Activated T-helper 2 cell treated with anti-CD3 and anti-CD28 coated beads, Interferon-gamma antibody, Interleukin-2, Interleukin-4, amounts not matched to agents 10 μg/mL and 5 μg/mL and 100 μg/mL, durations not matched to agents 14 hours and 24 hours and 36 hours (primary cell): ENCODE measurements at regions of chr5 and their contacts with region 1.

Region 1: DNA sequence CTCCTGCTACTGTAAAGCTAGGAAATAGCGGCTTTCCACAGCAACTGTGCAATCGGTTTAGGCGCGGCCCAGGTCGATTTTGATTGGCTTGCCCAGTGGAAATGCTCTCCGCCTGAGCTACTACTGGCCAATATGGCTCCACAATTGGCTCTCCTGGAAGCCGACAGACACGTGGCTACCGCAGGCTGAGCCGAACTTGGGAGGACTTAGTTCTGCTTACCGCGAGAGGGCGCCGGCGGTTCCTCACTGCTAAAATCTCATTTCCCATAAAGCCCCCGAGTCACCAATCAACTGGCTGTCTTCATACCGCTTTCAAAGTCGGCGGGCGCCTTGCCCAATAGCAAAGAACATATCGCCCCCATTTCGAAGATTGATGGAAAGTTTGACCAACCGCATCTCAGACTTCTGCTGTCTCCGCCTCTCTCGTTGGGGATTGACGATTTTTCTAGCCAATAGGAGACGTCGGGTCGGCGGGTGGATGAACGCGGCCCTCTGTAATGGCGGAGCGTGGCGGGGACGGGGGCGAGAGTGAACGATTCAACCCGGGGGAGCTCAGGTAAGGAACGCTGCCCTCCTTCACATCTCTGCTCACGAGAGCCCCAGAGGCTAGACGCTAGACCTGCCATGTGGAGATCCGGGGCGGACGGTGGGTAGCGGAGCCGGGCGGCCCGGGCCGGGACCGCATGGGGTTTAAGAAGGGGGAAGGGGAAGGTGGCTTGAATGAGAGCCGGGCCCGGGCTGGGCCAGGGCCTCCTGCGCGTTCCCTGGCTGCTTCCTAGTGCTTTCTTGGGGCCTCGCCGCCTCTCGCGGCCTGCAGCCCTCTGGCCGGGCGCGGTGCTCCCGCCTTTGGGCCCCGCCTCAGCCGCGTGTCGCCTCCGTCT is at the start of gene TCERG1:
- DNase-seq: peak; percentile 98
- H3K4me3 Mint-ChIP-seq: peak within 1 kb of the TSS; percentile 100
- H3K27ac Mint-ChIP-seq: peak within 1 kb of the TSS; percentile 100
- H3K4me1 Mint-ChIP-seq: peaks cover 29% of the 10 kb centered on the region
- H3K27me3 Mint-ChIP-seq: peaks cover 10% of the 10 kb centered on the region
- total RNA-seq, gene TCERG1: 134 and 136 TPM in 2 replicates

Region 2: GRCh38 chr5:145946112-145946861 is 500.8 kb before region 1 on chr5:
- intact Hi-C with region 1: loop called (anchors 5 kb)
- DNase-seq: no peak
- H3K4me3 Mint-ChIP-seq: peak overlapping the region; percentile 14
- H3K27ac Mint-ChIP-seq: peak overlapping the region; percentile 66
- H3K4me1 Mint-ChIP-seq: peaks cover 48% of the 10 kb centered on the region
- H3K27me3 Mint-ChIP-seq: peaks cover 21% of the 10 kb centered on the region

Region 3: DNA sequence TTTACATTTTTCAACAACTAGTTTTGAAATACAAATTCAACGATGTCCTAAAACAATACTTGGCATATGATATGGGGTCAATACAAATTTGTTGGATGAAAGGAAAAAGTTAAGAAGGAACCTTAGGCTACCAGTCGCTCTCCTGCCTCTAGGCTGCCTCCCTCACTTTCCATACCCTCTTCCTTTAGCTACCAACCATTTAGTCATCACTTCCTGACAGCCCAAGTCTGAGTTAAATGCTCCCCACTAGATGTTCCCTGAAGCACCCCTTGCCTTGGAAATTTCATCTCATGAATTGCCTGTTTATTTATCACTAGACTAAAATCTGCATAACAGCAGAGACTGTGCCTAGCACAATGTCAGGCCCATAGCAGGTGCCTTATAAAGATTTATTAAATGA is 261.9 kb before region 1 on chr5:
- intact Hi-C with region 1: loop called (anchors 1 kb)
- DNase-seq: no peak
- H3K4me3 Mint-ChIP-seq: no peak overlapping the region
- H3K27ac Mint-ChIP-seq: no peak overlapping the region
- H3K4me1 Mint-ChIP-seq: peaks cover 8% of the 10 kb centered on the region
- H3K27me3 Mint-ChIP-seq: peaks cover 4% of the 10 kb centered on the region

Region 4: GRCh38 chr5:146291421-146292074 is 155.5 kb before region 1 on chr5:
- intact Hi-C with region 1: loop called (anchors 5 kb)
- DNase-seq: no peak
- H3K4me3 Mint-ChIP-seq: no peak overlapping the region
- H3K27ac Mint-ChIP-seq: no peak overlapping the region
- H3K4me1 Mint-ChIP-seq: no peaks in the 10 kb centered on the region
- H3K27me3 Mint-ChIP-seq: no peaks in the 10 kb centered on the region

Region 5: GRCh38 chr5:146426853-146427618 is 20.1 kb before region 1 on chr5:
- intact Hi-C with region 1: no loop called
- DNase-seq: no peak
- H3K4me3 Mint-ChIP-seq: no peak overlapping the region
- H3K27ac Mint-ChIP-seq: no peak overlapping the region
- H3K4me1 Mint-ChIP-seq: peaks cover 6% of the 10 kb centered on the region
- H3K27me3 Mint-ChIP-seq: peaks cover 22% of the 10 kb centered on the region